Ascending aorta (tissue), 2 donors: ENCODE measurements at regions of chr19 and their contacts with region 1.

Region 1: DNA sequence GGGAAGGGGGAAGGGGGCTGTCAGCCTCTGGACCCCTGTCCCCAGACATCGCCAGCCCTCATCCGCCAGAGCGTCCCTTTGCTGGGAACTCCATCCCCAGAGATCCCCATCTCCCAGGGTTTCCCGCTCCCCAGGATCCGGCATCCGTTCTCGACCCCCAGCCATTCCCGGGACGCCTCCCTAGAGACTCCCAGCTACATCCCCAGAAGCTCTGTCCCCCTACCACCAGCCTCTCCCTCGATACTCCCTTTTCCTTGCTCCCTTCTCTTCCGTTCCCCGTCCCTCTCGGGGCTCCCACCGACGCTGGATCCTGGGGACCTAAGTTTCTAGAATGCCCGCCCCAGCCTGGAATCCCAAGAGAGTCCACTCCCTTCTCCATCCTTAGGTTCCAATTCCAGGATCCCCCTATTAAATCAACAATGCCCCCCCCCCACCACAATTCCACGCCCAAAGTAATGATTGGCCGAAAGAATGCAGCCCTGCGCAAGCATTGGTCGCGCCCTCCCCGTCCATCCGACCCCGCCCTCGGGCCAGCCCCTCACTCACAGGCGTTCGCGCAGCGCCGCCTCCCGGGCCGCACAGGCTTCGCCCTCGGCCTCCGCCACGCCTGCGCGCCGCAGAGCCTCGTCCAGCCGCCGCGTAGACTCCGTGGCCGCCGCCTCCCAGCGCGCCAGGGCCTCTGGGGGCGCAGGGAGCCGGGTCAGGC is 3.2 kb downstream of the CCDC194 start:
- DNase-seq: peak; percentile 67 to 96
- H3K4me3 ChIP-seq: peak overlapping the region; percentile 45 to 71
- H3K27ac ChIP-seq: peak overlapping the region in 1 of 2 donors; percentile 32
- H3K4me1 ChIP-seq: peaks cover 4 to 6% of the 10 kb centered on the region in 2 donors
- H3K27me3 ChIP-seq: no peaks in the 10 kb centered on the region
- CTCF ChIP-seq: peak; percentile 68 to 96 (median 80)

Region 2: DNA sequence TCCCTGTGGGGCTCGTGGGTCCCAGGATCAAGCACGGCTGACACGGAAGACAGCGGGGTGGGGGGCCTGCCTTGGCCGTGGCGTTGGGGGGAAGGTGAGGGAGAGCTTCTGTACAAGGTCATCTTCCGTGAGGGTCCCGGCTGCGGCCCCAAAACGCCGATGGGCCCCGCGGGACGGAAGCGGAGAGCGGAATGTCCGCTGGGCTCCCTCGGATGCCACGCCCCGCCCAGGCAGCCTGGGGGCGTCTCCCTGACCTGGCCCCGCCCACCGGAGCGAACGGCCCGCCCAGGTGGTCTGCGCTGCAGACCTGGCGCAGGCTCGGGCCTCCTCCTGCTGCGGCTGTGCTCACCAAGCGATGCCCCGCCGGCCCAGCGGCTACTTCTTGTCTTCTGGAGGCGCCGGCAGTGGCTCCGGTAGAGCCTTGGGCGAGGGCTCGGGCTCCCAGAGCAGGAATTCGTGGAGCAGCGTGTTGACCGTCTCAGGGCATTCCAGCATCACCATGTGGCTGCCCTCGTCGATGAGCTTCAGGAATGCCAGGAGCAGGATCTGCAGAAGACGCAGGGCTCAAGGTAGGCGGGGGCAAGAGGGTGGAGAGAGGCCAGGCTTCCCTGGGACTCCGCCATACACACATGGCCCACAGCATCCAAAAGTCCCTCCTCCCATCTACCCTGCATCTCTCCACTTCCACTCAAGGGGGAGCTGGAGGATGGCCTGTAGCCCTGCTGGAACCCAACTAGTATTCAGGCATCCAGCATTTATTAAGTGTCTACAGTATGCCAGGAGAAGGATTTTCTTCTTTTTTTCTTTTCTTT is 98.3 kb before region 1 on chr19:
- intact Hi-C with region 1: loop called (anchors 2 kb)
- DNase-seq: peak; percentile 41 to 86
- H3K4me3 ChIP-seq: peak overlapping the region; percentile 50 to 66
- H3K27ac ChIP-seq: peak overlapping the region; percentile 69 to 73
- H3K4me1 ChIP-seq: peaks cover 3 to 10% of the 10 kb centered on the region in 2 donors
- H3K27me3 ChIP-seq: no peaks in the 10 kb centered on the region
- CTCF ChIP-seq: peak; percentile 71 to 83 (median 82)

Region 3: DNA sequence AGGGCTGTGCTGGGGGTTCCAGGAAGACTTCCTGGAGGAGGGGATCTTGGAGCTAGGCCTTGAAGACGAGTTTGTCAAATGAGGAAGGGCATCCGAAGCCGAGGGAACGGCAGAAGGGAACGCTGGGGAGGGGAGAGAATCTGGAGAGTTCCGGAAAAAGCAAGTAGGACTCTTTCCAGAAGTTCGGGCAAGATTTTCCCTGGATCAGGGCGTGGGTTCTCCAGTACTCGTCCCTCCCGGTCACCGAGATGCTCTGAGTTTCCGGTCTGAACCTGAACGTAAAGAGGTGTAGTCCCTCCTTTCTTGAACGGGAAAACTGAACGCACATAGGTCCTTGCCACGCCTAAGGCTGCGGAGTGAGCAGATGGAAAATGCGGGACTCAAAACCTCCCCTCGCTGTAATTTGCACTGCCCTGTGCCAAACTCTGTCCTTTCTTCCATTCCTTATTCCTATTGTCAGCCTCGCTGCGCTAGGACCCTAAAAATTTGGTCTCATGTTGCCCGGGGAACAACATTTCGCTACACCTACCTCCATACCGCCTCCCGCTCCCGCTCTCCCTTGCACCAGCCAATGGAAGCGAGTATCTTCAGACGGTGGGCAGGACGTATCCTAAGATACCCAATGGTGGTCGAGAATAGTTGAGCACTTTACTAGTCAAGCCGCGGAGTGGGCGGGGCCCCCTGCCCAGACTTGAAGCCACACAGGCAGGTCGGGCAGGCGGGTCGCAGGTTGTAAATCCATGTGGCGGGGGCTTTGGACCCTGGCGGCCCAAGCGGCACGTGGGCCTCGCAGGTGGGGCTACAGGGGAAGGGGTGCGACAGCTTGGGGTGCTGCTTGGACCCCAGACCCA is 53.7 kb before region 1 on chr19 and contains the start of gene GTPBP3:
- intact Hi-C with region 1: loop called (anchors 2 kb)
- DNase-seq: peak; percentile 97 to 99
- H3K4me3 ChIP-seq: peak within 1 kb of the TSS; percentile 84 to 91
- H3K27ac ChIP-seq: peak within 1 kb of the TSS; percentile 91 to 95
- H3K4me1 ChIP-seq: peaks cover 15 to 23% of the 10 kb centered on the region in 2 donors
- H3K27me3 ChIP-seq: no peaks in the 10 kb centered on the region
- CTCF ChIP-seq: no peak
- total RNA-seq, gene GTPBP3: 256 TPM

Region 4: GRCh38 chr19:17346109-17346671 is 44.6 kb before region 1 on chr19:
- intact Hi-C with region 1: loop called (anchors 1 kb)
- DNase-seq: peak in 1 of 2 donors; percentile 88
- H3K4me3 ChIP-seq: no peak overlapping the region
- H3K27ac ChIP-seq: peak overlapping the region; percentile 87 to 90
- H3K4me1 ChIP-seq: peaks cover 5 to 32% of the 10 kb centered on the region in 2 donors
- H3K27me3 ChIP-seq: no peaks in the 10 kb centered on the region
- CTCF ChIP-seq: peak; percentile 93 to 96 (median 96)

Region 5: GRCh38 chr19:17376935-17377600 is 13.8 kb before region 1 on chr19 and contains the start of gene PLVAP:
- intact Hi-C with region 1: no loop called
- DNase-seq: peak in 1 of 2 donors; percentile 68
- H3K4me3 ChIP-seq: peak within 1 kb of the TSS in 1 of 2 donors; percentile 26
- H3K27ac ChIP-seq: no peak within 1 kb of the TSS
- H3K4me1 ChIP-seq: peaks cover 0 to 2% of the 10 kb centered on the region in 2 donors
- H3K27me3 ChIP-seq: no peaks in the 10 kb centered on the region
- CTCF ChIP-seq: no peak
- total RNA-seq, gene PLVAP: 378 TPM

Region 6: GRCh38 chr19:17419621-17420466 is 29.0 kb after region 1 on chr19 and contains the start of gene MVB12A:
- intact Hi-C with region 1: loop called (anchors 1 kb)
- DNase-seq: peak; percentile 91 to 98
- H3K4me3 ChIP-seq: peak within 1 kb of the TSS; percentile 62 to 85
- H3K27ac ChIP-seq: peak within 1 kb of the TSS; percentile 28 to 78
- H3K4me1 ChIP-seq: peaks cover 5 to 6% of the 10 kb centered on the region in 2 donors
- H3K27me3 ChIP-seq: no peaks in the 10 kb centered on the region
- CTCF ChIP-seq: no peak
- total RNA-seq, gene MVB12A: 49.6 TPM